GM13977 (cell line): ENCODE measurements at regions of chr6 and their contacts with region 1.

Region 1: DNA sequence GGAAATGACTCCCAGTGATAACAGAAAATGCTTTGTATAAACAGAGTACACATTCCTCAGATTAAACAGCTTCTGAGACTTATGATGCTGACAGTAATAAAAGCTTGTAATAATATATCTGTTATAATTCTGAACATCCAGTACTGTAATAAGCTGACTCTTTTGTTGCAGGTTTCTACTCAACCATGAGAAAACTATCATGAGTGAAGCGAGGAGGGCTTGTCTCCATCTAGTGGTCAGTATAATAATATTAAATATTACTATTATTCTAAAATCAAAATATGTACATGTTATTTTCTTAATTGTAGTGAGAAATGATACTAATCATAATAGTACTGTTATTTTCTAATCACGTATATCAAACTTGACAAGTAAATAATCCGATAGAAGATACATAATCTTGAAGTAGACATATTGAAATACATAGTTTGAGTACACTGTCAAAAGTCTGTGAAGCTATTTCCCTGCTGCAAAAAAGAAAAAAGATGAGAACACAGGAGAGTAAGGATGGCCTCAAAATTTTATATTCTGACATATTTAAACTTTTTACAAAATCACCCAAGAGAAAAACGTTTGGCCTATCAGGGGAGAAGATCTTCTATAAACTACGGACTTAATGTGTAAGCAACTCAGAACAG is 183.1 kb downstream of the MOXD1 start:
- DNase-seq: peak; percentile 6
- CTCF ChIP-seq: peak; percentile 30

Region 2: DNA sequence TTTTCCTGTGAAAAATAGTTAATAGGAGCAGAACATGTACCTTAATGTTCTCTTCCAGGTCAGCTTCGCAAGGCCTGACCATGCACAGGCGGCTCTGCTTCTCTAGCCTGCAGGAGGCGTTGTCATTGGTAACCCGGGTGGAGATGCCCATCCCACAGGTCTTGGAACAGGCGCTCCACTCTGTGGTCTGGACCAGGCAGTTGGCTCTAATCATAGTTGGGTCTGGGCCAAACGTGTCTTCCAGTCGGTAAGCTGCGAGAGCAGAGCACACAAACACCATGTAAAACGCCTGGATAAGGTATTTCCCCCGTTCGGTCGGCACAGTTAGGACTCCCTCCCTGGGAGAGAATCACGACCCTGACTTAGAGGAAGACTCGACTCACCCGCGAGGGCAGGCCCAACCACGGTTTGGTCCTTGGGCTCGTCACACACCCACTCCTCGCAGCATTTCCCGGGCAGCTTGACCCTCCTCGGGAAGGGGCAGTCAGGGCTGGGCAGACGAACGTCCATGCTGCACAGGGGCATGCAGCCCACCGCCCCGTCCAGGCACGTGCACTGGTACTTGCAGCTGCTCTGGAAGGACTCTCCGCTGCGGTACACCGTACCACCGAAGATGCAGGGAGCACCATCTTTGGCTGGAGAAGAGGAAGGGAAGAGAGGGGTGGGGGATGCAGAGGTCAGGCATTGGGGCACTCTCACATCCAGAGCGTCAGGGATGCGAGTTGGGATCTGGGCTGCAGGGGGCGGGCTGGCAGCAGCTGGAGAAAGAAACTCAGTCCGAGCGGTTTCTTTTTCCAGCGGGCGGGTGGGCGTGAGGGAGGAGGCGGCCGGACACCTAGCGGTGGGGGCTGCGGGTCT is 268.0 kb before region 1 on chr6:
- in situ Hi-C with region 1: loop called (anchors 25 kb)
- DNase-seq: peak; percentile 50
- CTCF ChIP-seq: peak; percentile 32